ENCODE measurements at regions of chr2 and their contacts with region 1.

Region 1: DNA sequence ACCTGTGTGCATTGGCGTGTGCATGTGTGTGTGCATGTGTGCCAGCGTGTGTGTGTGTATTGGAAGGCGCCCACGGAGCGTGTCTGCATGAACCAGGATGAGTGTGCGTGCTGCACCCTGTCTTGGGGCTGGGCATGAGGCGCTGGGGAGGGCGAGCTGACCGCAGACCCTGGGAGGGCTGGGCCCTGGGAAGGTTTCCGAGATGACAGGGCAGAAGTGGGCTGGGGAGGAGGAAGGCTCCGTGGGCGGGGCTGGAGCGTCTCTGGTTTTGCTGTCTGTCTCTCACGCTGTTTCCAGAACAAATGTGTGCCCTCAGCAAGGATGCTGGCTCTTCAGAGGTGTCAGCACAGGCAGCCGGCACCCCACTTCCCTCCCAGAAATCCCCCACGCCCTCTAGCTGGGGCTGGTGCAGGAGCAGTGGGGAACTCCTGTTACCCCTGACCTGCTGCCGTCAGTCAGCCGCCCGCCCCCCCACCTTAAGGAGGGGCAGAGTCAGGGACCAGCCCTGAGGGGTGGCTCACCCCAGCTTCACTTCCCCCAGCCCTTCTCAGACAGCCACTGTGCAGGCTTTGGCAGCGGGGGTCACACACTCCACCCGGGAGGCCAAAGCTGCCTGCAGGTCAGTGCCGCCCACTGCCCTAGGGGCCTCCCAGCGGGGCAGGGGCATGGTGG is at the start of gene GPR35:
- DNase-seq: peak; percentile 76 to 94
- ATAC-seq: peak; percentile 81 to 90 (median 83)
- H3K4me3 ChIP-seq: peak within 1 kb of the TSS; percentile 16
- H3K4me3 Mint-ChIP-seq: peak within 1 kb of the TSS; percentile 72
- H3K27ac ChIP-seq: peak within 1 kb of the TSS; percentile 88
- H3K27ac Mint-ChIP-seq: peak within 1 kb of the TSS; percentile 91 to 95
- H3K4me1 ChIP-seq: peaks cover 75% of the 10 kb centered on the region
- H3K4me1 Mint-ChIP-seq: peaks cover 30 to 56% of the 10 kb centered on the region in 2 donors
- H3K27me3 ChIP-seq: no peaks in the 10 kb centered on the region
- H3K27me3 Mint-ChIP-seq: no peaks in the 10 kb centered on the region
- CTCF ChIP-seq: no peak
- total RNA-seq, gene GPR35: 10.6 to 19.7 (median 15.7) TPM

Region 2: DNA sequence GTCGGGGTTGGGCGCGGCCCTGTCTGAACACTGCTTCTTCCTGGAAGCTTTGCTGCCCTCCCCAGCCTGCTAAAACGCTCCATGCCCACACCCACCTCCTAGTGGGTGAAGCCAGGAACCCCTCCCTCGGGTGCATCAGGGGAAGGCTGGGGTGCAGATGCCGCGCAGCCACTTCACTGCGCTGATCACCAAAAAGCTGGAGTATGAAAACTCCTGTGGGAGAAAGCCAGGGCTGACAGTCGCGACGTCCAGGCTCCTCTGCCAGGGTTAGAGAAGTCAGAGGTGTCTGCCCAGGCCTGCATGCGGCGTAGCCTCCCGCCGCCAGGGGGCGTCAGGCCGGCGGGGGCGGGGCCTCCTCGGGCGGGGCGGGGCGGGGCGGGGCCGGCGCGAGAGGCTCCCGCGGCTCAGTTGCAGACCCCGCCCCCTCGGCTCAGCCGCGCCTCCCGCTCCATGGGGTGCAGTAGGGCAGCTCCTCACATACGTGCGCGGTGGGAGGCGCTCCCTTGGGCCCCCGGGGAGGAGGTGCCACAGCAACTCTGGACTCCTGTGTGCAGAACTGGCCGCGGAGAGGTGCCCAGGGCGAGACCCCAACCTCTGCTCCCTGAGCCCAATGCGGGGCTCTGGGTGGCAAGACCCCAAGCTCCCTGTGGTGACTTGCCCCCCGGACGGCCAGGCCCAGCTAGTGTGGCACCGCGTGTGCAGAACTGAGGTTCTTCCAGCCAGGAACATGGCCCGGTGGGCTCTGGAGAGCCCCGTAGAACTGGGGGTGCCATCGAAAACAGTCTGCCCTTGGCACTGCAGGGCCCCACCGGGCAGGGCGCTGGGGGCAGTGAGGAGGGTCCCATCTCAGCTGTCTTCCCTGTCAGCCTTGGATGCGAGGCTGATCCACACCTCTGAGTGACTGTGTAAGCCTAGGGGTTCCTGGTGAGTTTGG is 58.6 kb before region 1 on chr2:
- intact Hi-C with region 1: loop called (anchors 2 kb)
- DNase-seq: peak; percentile 91 to 96
- ATAC-seq: peak; percentile 56 to 80 (median 63)
- H3K4me3 ChIP-seq: peak overlapping the region; percentile 76
- H3K4me3 Mint-ChIP-seq: peak overlapping the region; percentile 96
- H3K27ac ChIP-seq: peak overlapping the region; percentile 93
- H3K27ac Mint-ChIP-seq: peak overlapping the region; percentile 99
- H3K4me1 ChIP-seq: peaks cover 87% of the 10 kb centered on the region
- H3K4me1 Mint-ChIP-seq: peaks cover 69 to 79% of the 10 kb centered on the region in 2 donors
- H3K27me3 ChIP-seq: no peaks in the 10 kb centered on the region
- H3K27me3 Mint-ChIP-seq: no peaks in the 10 kb centered on the region
- CTCF ChIP-seq: peak; percentile 98

Region 3: DNA sequence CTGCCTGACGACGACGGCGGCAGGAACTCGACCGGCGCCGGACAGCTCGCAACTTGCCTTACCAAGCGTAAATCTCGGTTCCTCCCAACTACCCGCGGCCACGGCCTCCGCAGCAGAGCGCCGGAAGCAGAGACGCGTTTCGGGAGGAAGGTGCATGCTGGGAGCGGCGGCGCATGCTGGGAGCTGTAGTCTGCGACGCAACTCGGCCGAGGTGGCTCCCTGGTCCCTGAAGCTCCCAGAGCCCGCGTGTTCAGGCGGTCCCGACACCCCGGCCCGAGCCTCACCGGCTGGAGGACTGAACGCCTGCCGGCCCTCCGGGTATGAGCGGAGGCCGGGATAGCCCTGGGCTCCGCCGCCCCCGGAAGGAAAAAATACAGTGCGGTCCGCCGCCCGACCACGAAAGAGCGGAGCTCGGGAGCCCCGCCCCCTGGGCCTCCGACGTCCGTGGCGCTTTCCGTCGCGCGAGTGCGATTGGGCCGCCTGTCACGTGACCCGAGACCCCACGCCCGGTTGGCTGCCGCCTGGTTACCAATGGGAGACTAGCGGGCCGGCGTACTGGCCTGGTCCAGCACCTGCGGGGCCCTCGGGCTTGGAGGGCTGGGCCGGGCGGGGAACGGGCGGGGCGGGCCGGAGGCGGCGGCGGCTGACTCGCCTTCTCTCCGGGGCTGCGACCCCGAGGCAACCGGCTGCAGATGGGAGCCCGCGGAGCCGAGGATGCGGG is 38.7 kb before region 1 on chr2 and contains the start of gene CAPN10:
- intact Hi-C with region 1: loop called (anchors 1 kb)
- DNase-seq: peak; percentile 96 to 98
- ATAC-seq: peak; percentile 86 to 92 (median 88)
- H3K4me3 ChIP-seq: peak within 1 kb of the TSS; percentile 89
- H3K4me3 Mint-ChIP-seq: peak within 1 kb of the TSS; percentile 95
- H3K27ac ChIP-seq: peak within 1 kb of the TSS; percentile 91
- H3K27ac Mint-ChIP-seq: peak within 1 kb of the TSS; percentile 89 to 91
- H3K4me1 ChIP-seq: peaks cover 38% of the 10 kb centered on the region
- H3K4me1 Mint-ChIP-seq: peaks cover 38 to 49% of the 10 kb centered on the region in 2 donors
- H3K27me3 ChIP-seq: no peaks in the 10 kb centered on the region
- H3K27me3 Mint-ChIP-seq: no peaks in the 10 kb centered on the region
- CTCF ChIP-seq: no peak
- total RNA-seq, gene CAPN10: 69.3 to 95.1 (median 91.0) TPM

Region 4: GRCh38 chr2:240604291-240604938 is 20.7 kb before region 1 on chr2:
- intact Hi-C with region 1: no loop called
- DNase-seq: no peak
- ATAC-seq: peak in 2 of 3 donors; percentile 38 to 40
- H3K4me3 ChIP-seq: no peak overlapping the region
- H3K4me3 Mint-ChIP-seq: no peak overlapping the region
- H3K27ac ChIP-seq: no peak overlapping the region
- H3K27ac Mint-ChIP-seq: peak overlapping the region in 1 of 2 donors; percentile 42
- H3K4me1 ChIP-seq: peaks cover 9% of the 10 kb centered on the region
- H3K4me1 Mint-ChIP-seq: peaks cover 6 to 7% of the 10 kb centered on the region in 2 donors
- H3K27me3 ChIP-seq: no peaks in the 10 kb centered on the region
- H3K27me3 Mint-ChIP-seq: no peaks in the 10 kb centered on the region
- CTCF ChIP-seq: no peak

Region 5: DNA sequence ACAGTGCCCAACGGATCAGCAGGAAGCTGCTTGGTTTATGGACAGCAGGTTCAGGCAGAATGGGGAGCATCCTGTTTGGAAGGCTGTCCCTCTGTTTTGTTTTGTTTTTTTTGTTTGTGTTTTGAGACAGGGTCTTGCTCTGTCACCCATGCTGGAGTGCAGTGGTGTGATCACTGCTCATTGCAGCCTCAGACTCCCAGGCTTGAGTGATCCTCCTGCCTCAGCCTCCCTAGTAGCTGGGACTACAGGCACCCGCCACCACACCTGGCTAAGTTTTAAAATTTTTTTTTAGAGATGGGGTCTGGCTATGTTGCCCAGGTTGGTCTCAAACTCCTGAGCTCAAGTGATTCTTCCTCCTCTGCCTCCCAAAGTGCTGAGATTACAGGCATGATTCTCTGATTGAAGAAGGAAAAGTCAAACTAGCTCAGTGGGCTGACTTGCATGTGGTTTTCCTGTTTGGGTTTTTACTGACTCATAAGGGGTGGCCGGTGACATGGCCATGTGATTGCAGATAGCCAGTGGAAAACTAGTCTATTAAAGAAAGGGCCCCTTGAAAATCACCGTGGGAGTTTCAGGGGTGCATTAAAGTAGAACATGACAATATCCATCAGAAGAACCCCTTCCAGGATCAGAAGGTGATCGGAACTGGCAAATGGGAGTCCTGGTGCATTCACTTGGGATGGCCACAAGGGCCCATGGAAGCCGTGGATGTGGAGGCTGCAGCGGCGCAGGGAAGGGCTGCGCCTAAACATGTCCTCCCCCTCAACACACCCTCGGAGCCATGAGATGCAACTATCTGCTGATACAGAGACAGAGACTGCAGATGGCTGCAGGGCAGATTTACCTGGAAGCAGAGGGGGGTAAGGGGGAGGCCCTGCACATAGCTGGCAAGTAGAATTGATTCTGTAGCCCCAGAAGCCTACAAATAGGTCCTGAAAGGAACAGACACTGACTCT is 31.1 kb after region 1 on chr2:
- intact Hi-C with region 1: loop called (anchors 5 kb)
- DNase-seq: peak in 1 of 2 donors; percentile 39
- ATAC-seq: peak; percentile 85 to 99 (median 97)
- H3K4me3 ChIP-seq: no peak overlapping the region
- H3K4me3 Mint-ChIP-seq: peak overlapping the region; percentile 13
- H3K27ac ChIP-seq: no peak overlapping the region
- H3K27ac Mint-ChIP-seq: peak overlapping the region; percentile 50 to 82
- H3K4me1 ChIP-seq: peaks cover 18% of the 10 kb centered on the region
- H3K4me1 Mint-ChIP-seq: peaks cover 9 to 21% of the 10 kb centered on the region in 2 donors
- H3K27me3 ChIP-seq: no peaks in the 10 kb centered on the region
- H3K27me3 Mint-ChIP-seq: peaks cover 17 to 25% of the 10 kb centered on the region in 2 donors
- CTCF ChIP-seq: no peak

Region 6: DNA sequence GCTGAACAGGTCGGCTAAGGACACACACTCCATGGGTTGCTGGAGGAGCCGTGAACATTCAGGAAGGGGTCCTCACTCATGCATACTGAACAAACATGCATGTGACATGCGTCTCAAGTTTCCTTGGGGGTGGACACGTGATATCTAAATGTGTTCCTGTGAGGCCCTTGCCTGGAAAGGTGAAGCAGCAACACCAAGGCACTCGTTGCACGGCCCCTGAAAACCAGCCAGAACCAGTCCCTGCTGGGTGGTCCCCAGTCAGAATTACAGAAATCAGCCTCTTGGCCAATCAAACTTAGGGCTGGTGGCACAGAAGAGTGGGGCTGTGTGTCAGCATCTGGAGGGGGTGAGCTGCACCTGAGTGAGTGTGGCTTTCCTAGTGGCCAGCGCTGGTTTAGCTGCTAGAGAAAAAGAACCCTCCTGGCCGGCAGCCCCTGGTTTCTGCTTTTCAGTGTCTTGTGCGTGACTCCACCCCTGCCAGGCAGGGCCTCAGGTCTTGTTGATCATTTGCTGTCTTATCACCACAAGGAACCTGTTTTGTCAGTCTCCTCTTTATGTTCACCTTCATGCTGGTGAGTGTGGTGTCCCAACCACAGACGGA is 60.8 kb after region 1 on chr2:
- intact Hi-C with region 1: loop called (anchors 5 kb)
- DNase-seq: peak in 1 of 2 donors; percentile 15
- ATAC-seq: peak in 2 of 3 donors; percentile 52 to 54
- H3K4me3 ChIP-seq: no peak overlapping the region
- H3K4me3 Mint-ChIP-seq: peak overlapping the region; percentile 29
- H3K27ac ChIP-seq: no peak overlapping the region
- H3K27ac Mint-ChIP-seq: peak overlapping the region; percentile 36 to 77
- H3K4me1 ChIP-seq: peaks cover 25% of the 10 kb centered on the region
- H3K4me1 Mint-ChIP-seq: peaks cover 11 to 21% of the 10 kb centered on the region in 2 donors
- H3K27me3 ChIP-seq: no peaks in the 10 kb centered on the region
- H3K27me3 Mint-ChIP-seq: no peaks in the 10 kb centered on the region
- CTCF ChIP-seq: no peak

Measured in natural killer cell (primary cell).